AG04449 (cell line): ENCODE measurements at regions of chr1 and their contacts with region 1.

Region 1: GRCh38 chr1:210360852-210361477 is 32.3 kb downstream of the HHAT start:
- DNase-seq: peak; percentile 37
- H3K4me3 ChIP-seq: no peak overlapping the region
- CTCF ChIP-seq: peak; percentile 60

Region 2: GRCh38 chr1:210159206-210159605 is 201.8 kb before region 1 on chr1:
- CTCF ChIA-PET with region 1: no interaction called
- POLR2A ChIA-PET with region 1: no interaction called
- DNase-seq: no peak
- H3K4me3 ChIP-seq: no peak overlapping the region
- CTCF ChIP-seq: no peak

Region 3: GRCh38 chr1:210332719-210333398 is 28.1 kb before region 1 on chr1:
- CTCF ChIA-PET with region 1: interaction called, 15 read pairs
- POLR2A ChIA-PET with region 1: no interaction called
- DNase-seq: no peak
- H3K4me3 ChIP-seq: no peak overlapping the region
- CTCF ChIP-seq: no peak

Region 4: GRCh38 chr1:210342986-210343780 is 17.8 kb before region 1 on chr1:
- CTCF ChIA-PET with region 1: interaction called, 30 read pairs
- POLR2A ChIA-PET with region 1: no interaction called
- DNase-seq: no peak
- H3K4me3 ChIP-seq: peak overlapping the region; percentile 34
- CTCF ChIP-seq: no peak

Region 5: DNA sequence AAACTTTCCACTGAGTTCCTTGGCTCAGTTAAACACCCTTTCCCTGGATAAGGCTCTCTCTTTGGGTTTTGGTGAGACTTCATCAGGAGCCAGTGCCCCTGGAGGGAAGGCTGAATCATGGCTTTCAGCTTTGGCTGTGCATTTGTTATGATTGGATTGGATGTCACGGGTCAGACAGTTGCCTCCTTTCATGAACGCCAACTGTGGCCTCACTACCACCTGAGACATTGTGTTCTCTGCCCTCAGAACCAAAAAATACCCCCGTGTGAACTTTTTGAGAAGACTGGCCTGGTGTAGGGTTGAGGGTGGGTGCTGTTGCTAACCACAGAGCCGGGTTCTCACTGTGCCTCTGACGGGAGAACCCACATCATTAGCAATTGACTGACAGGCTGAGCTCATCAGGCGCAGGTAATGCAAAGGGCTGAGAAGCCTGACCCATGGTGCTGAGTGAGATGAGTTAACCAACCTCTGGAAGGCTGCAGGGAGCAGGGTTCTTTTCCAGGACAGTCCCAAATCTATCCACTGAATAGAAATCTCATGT is 33.4 kb after region 1 on chr1:
- CTCF ChIA-PET with region 1: interaction called, 201 read pairs
- POLR2A ChIA-PET with region 1: no interaction called
- DNase-seq: no peak
- H3K4me3 ChIP-seq: no peak overlapping the region
- CTCF ChIP-seq: no peak

Region 6: GRCh38 chr1:210400043-210400840 is 39.3 kb after region 1 on chr1:
- CTCF ChIA-PET with region 1: interaction called, 201 read pairs
- POLR2A ChIA-PET with region 1: no interaction called
- DNase-seq: peak; percentile 38
- H3K4me3 ChIP-seq: no peak overlapping the region
- CTCF ChIP-seq: peak; percentile 86

Region 7: DNA sequence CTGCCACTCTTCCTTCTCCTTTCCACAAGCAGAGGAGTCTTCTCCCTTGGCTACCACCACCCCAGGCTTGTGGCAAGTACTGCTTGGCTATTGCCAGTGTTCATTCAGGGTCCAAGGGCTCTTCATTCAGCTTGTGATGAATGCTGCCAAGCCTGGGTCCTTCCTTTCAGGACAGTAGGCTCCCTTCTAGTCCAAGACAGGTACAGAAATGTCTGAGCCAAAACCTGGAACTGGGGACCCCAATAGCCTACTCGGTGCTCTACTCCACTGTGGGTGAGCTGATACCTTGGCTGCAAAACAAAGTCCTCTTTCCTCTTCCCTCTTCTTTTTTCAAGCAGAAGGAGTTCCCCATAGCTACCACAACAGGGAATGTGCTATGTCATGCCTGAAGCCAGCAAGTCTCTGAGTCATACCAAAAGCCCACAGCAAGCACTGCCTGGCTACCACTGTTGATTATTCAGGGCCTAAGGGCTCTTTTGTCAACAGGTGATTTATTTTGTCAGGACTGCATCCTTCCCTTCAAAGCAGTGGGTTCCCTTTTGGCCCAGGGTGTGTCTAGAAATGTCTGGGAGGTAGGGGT is 236.7 kb after region 1 on chr1:
- CTCF ChIA-PET with region 1: no interaction called
- POLR2A ChIA-PET with region 1: no interaction called
- DNase-seq: peak; percentile 86
- H3K4me3 ChIP-seq: no peak overlapping the region
- CTCF ChIP-seq: no peak